Right ventricle myocardium superior (tissue), 1 donor: ENCODE measurements at regions of chr3 and their contacts with region 1.

Region 1: DNA sequence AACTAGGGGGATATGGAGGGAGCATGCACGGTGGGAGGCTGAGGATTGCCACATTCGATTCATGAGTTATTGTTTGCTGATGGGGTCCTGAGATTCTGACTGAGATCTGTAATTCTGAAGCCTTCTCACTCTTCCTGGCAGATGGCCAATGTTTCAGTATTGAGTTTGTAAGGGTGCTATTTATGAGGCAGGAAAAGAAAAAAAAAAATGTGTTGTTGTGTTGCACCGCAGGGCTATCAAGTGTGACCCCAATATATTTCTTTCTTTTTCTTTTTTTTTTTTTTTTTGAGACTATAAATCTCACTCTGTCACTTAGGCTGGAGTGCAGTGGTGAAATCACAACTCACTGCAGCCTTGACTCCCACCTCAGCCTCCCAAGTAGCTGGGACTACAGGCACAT is 3.2 kb upstream of the SENP2 start:
- DNase-seq: no peak
- ATAC-seq: no peak

Region 2: GRCh38 chr3:185504642-185505041 is 78.2 kb before region 1 on chr3:
- intact Hi-C with region 1: loop called (anchors 5 kb)
- DNase-seq: no peak
- ATAC-seq: no peak

Region 3: DNA sequence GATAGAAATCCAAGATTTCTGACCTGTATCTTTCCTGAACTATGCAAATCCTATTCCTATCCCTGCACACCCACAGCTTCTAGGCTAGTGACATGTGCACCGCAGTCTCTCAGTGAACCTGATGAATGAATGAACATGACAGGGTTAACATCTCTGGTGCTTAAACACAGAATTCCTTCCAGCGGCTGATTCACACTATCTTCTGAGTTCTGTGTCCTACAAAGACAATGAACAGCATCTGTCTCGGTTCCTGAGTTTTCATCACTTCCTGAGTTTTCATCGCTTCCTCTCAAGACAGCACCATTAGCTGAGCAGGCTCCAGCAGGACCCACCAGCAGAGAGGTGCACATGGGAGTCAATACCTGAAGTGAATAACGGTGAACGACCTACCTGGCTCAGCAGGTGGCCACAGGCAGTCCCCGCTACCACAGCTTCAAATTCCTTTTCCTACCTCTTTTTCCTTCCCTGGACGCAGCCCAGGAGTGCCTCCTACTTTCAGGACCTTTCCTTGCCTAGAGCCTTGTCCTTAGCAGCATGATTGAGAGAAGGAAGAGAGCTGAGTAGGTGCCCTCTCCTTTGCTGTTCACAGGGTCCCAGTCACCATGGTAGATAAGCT is 128.5 kb after region 1 on chr3:
- intact Hi-C with region 1: no loop called
- DNase-seq: no peak
- ATAC-seq: no peak